SK-N-SH (cell line): ENCODE measurements at regions of chr6 and their contacts with region 1.

Region 1: GRCh38 chr6:89432875-89433251 is at the start of gene ANKRD6:
- DNase-seq: peak; percentile 95
- H3K4me3 ChIP-seq: peak within 1 kb of the TSS; percentile 70 to 71
- H3K27ac ChIP-seq: no peak within 1 kb of the TSS; a peak in 1 of 4 replicates
- H3K4me1 ChIP-seq: peaks cover 7 to 9% of the 10 kb centered on the region in 2 experiments; a peak in 2 of 4 replicates
- H3K27me3 ChIP-seq: no peaks in the 10 kb centered on the region
- CTCF ChIP-seq: peak; percentile 68
- EP300 ChIP-seq: no peak
- RAD21 ChIP-seq: peak; percentile 83
- polyA plus RNA-seq, gene ANKRD6: 2.0 and 2.6 TPM in 2 replicates

Region 2: GRCh38 chr6:89412071-89413005 is 20.5 kb before region 1 on chr6 and contains the start of gene RRAGD:
- CTCF ChIA-PET with region 1: interaction called, 34 read pairs
- POLR2A ChIA-PET with region 1: no interaction called
- DNase-seq: peak; percentile 91
- H3K4me3 ChIP-seq: peak within 1 kb of the TSS; percentile 63 to 66
- H3K27ac ChIP-seq: peak within 1 kb of the TSS in 1 of 2 experiments; percentile 28; a peak in 1 of 4 replicates
- H3K4me1 ChIP-seq: peaks cover 0 to 12% of the 10 kb centered on the region in 2 experiments; a peak in 1 of 4 replicates
- H3K27me3 ChIP-seq: peaks cover 40% of the 10 kb centered on the region; the same call in 1 of the 2 replicates
- CTCF ChIP-seq: no peak
- EP300 ChIP-seq: no peak
- RAD21 ChIP-seq: no peak
- polyA plus RNA-seq, gene RRAGD: 0.05 and 0.07 TPM in 2 replicates

Region 3: GRCh38 chr6:89443658-89444057 is 10.8 kb after region 1 on chr6:
- CTCF ChIA-PET with region 1: interaction called, 11 read pairs
- POLR2A ChIA-PET with region 1: no interaction called
- DNase-seq: peak; percentile 24
- H3K4me3 ChIP-seq: no peak overlapping the region
- H3K27ac ChIP-seq: no peak overlapping the region
- H3K4me1 ChIP-seq: no peaks in the 10 kb centered on the region
- H3K27me3 ChIP-seq: no peaks in the 10 kb centered on the region
- CTCF ChIP-seq: no peak
- EP300 ChIP-seq: peak in 1 of 2 experiments; percentile 21; a peak in 1 of 4 replicates
- RAD21 ChIP-seq: no peak

Region 4: GRCh38 chr6:89597988-89598692 is 165.3 kb after region 1 on chr6:
- CTCF ChIA-PET with region 1: interaction called, 35 read pairs
- POLR2A ChIA-PET with region 1: no interaction called
- DNase-seq: peak; percentile 62
- H3K4me3 ChIP-seq: no peak overlapping the region
- H3K27ac ChIP-seq: no peak overlapping the region
- H3K4me1 ChIP-seq: no peaks in the 10 kb centered on the region
- H3K27me3 ChIP-seq: no peaks in the 10 kb centered on the region
- CTCF ChIP-seq: peak; percentile 49
- EP300 ChIP-seq: no peak
- RAD21 ChIP-seq: peak; percentile 80

Region 5: DNA sequence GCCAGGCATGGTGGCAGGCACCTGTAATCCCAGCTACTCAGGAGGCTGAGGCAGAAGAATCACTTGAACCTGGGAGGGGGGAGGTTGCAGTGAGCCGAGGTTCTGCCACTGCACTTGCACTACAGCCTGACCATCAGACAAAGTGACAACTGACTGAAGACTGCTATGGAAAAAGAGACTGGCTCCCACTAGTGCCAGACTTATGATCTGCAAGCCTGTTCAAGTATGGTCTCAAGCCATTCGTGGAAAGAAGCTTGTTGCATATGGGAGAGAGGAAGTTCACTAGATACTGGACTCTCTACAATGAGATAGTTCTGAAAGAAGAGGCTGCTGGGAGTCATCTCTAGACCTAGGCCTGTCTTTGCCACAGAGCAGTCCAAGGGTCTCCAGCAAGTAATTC is 360.0 kb after region 1 on chr6:
- CTCF ChIA-PET with region 1: interaction called, 13 read pairs
- POLR2A ChIA-PET with region 1: no interaction called
- DNase-seq: peak; percentile 47
- H3K4me3 ChIP-seq: no peak overlapping the region
- H3K27ac ChIP-seq: no peak overlapping the region
- H3K4me1 ChIP-seq: no peaks in the 10 kb centered on the region; a peak in 1 of 4 replicates
- H3K27me3 ChIP-seq: no peaks in the 10 kb centered on the region
- CTCF ChIP-seq: peak; percentile 56
- EP300 ChIP-seq: no peak
- RAD21 ChIP-seq: peak; percentile 51